Activated T-helper 2 cell treated with anti-CD3 and anti-CD28 coated beads, Interferon-gamma antibody, Interleukin-2, Interleukin-4, amounts not matched to agents 10 μg/mL and 5 μg/mL and 100 μg/mL, durations not matched to agents 14 hours and 24 hours and 36 hours (primary cell): ENCODE measurements at regions of chr5 and their contacts with region 1.

Region 1: GRCh38 chr5:16666883-16667398 is 50.1 kb upstream of the RETREG1 start:
- DNase-seq: no peak
- H3K4me3 Mint-ChIP-seq: no peak overlapping the region
- H3K27ac Mint-ChIP-seq: no peak overlapping the region
- H3K4me1 Mint-ChIP-seq: peaks cover 5% of the 10 kb centered on the region
- H3K27me3 Mint-ChIP-seq: peaks cover 2% of the 10 kb centered on the region

Region 2: GRCh38 chr5:16160706-16161105 is 506.2 kb before region 1 on chr5:
- intact Hi-C with region 1: loop called (anchors 10 kb)
- DNase-seq: no peak
- H3K4me3 Mint-ChIP-seq: no peak overlapping the region
- H3K27ac Mint-ChIP-seq: no peak overlapping the region
- H3K4me1 Mint-ChIP-seq: no peaks in the 10 kb centered on the region
- H3K27me3 Mint-ChIP-seq: no peaks in the 10 kb centered on the region

Region 3: GRCh38 chr5:16315501-16315900 is 351.4 kb before region 1 on chr5:
- intact Hi-C with region 1: no loop called
- DNase-seq: no peak
- H3K4me3 Mint-ChIP-seq: no peak overlapping the region
- H3K27ac Mint-ChIP-seq: no peak overlapping the region
- H3K4me1 Mint-ChIP-seq: no peaks in the 10 kb centered on the region
- H3K27me3 Mint-ChIP-seq: no peaks in the 10 kb centered on the region

Region 4: GRCh38 chr5:16552666-16553343 is 114.1 kb before region 1 on chr5:
- intact Hi-C with region 1: loop called (anchors 10 kb)
- DNase-seq: peak; percentile 12
- H3K4me3 Mint-ChIP-seq: no peak overlapping the region
- H3K27ac Mint-ChIP-seq: no peak overlapping the region
- H3K4me1 Mint-ChIP-seq: peaks cover 17% of the 10 kb centered on the region
- H3K27me3 Mint-ChIP-seq: no peaks in the 10 kb centered on the region

Region 5: GRCh38 chr5:16626663-16627264 is 40.2 kb before region 1 on chr5:
- intact Hi-C with region 1: loop called (anchors 5 kb)
- DNase-seq: peak; percentile 39
- H3K4me3 Mint-ChIP-seq: peak overlapping the region; percentile 5
- H3K27ac Mint-ChIP-seq: peak overlapping the region; percentile 78
- H3K4me1 Mint-ChIP-seq: peaks cover 45% of the 10 kb centered on the region
- H3K27me3 Mint-ChIP-seq: no peaks in the 10 kb centered on the region